ENCODE measurements at regions of chr17 and their contacts with region 1.

Region 1: GRCh38 chr17:45317112-45317928 is 500 bp upstream of the MAP3K14 start:
- DNase-seq: peak; percentile 99 to 100 (median 100)
- ATAC-seq: peak; percentile 85 to 89 (median 88)
- H3K4me3 ChIP-seq: peak overlapping the region in 3 of 4 donors; percentile 73 to 91 (median 85)
- H3K27ac ChIP-seq: peak overlapping the region; percentile 90 to 95 (median 94)
- H3K4me1 ChIP-seq: peaks cover 22 to 40% (median 27%) of the 10 kb centered on the region in 3 donors
- H3K27me3 ChIP-seq: no peaks in the 10 kb centered on the region
- CTCF ChIP-seq: no peak

Region 2: DNA sequence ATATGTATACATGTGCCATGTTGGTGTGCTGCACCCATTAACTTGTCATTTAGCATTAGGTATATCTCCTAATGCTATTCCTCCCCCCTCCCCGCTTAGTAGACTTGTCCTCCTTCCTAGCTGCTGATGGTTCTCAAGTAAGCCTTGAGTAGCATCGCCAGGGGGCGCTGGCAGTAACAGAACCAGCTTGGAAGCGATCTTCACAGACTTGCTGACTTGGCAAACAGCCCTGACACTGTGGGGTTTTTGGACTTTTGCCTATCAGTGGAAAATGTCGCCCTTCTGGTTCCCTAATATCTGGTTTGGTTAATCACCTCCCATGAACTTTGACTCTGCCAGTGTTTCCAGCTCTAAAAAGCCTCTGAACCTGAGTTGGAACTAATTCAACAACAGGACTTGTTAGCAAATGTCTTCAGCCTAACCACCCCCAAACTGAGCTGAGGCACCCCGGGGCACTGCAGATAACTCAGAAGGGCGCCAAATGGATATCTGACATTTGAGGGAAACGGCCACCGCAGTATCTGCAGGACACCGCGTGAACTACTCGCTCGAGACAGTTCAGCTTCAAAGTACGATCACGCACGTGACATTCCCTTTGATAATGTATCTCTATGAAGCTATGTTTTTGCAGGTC is 40.0 kb before region 1 on chr17:
- intact Hi-C with region 1: loop called in 2 of 3 experiments (anchors 5 kb)
- DNase-seq: peak; percentile 91 to 95 (median 95)
- ATAC-seq: peak; percentile 81 to 92 (median 86)
- H3K4me3 ChIP-seq: peak overlapping the region in 2 of 4 donors; percentile 8 to 13
- H3K27ac ChIP-seq: peak overlapping the region; percentile 41 to 80 (median 66)
- H3K4me1 ChIP-seq: peaks cover 10 to 19% (median 14%) of the 10 kb centered on the region in 3 donors
- H3K27me3 ChIP-seq: no peaks in the 10 kb centered on the region
- CTCF ChIP-seq: peak; percentile 69 to 74 (median 73)

Region 3: GRCh38 chr17:45284176-45285140 is 32.9 kb before region 1 on chr17:
- intact Hi-C with region 1: loop called in 2 of 3 experiments (anchors 5 kb)
- DNase-seq: peak in 1 of 6 donors; percentile 29
- ATAC-seq: peak in 3 of 4 donors; percentile 14 to 54 (median 41)
- H3K4me3 ChIP-seq: no peak overlapping the region
- H3K27ac ChIP-seq: no peak overlapping the region
- H3K4me1 ChIP-seq: peaks cover 18 to 22% (median 20%) of the 10 kb centered on the region in 3 donors
- H3K27me3 ChIP-seq: no peaks in the 10 kb centered on the region
- CTCF ChIP-seq: no peak

Region 4: GRCh38 chr17:45660474-45660873 is 343.2 kb after region 1 on chr17:
- intact Hi-C with region 1: no loop called
- DNase-seq: no peak
- ATAC-seq: peak in 1 of 4 donors; percentile 65
- H3K4me3 ChIP-seq: no peak overlapping the region
- H3K27ac ChIP-seq: no peak overlapping the region
- H3K4me1 ChIP-seq: no peaks in the 10 kb centered on the region
- H3K27me3 ChIP-seq: no peaks in the 10 kb centered on the region
- CTCF ChIP-seq: no peak